Spleen (tissue), 13 donors: ENCODE measurements at regions of chr10 and their contacts with region 1.

Region 1: DNA sequence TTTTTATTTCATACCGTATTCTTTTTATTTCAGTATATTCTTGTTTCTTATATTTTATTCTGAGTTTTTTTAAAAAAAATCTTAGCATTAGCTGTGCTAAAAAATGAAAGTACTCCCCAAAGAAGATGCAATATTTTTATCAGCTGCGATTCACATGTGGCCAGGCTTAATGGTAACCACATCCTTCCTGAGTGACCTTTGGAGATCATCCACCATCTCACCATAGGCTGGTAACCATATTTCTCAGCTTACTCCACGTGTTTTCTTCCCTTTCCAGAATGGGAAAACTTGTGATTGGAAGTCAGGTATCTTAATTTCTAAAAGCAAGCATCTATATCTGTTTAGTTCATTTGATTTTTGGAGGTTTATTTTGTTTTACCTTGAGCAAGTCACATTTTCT is 18.8 kb upstream of the LIPM start:
- DNase-seq: no peak
- H3K4me3 ChIP-seq: no peak overlapping the region
- H3K27ac ChIP-seq: no peak overlapping the region
- H3K4me1 ChIP-seq: no peaks in the 10 kb centered on the region
- H3K27me3 ChIP-seq: no peaks in the 10 kb centered on the region
- CTCF ChIP-seq: no peak
- POLR2A ChIP-seq: no peak

Region 2: GRCh38 chr10:88693392-88694020 is 90.2 kb before region 1 on chr10:
- intact Hi-C with region 1: loop called (anchors 10 kb)
- DNase-seq: no peak
- H3K4me3 ChIP-seq: no peak overlapping the region
- H3K27ac ChIP-seq: no peak overlapping the region
- H3K4me1 ChIP-seq: no peaks in the 10 kb centered on the region
- H3K27me3 ChIP-seq: no peaks in the 10 kb centered on the region
- CTCF ChIP-seq: peak in 2 of 11 experiments; percentile 10 to 14
- POLR2A ChIP-seq: no peak

Region 3: DNA sequence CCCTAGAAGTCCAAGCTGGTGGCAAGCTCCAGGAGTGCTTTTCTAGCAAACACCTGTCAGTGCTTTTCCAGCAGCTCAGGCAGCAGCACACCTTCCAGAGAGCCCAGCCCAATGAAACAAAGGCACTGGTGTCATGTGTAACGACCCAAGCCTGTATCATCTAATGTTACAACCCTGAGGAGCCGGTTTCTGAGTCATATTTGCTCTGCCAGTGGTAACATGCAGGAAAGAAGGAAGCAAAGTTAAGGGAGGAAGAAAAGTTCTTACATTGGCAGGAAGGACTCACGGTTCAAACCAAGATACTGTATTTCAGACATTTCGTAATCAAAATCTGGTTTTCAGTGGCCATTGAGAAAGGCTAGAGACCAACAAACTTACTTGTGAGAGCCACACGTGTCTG is 68.0 kb after region 1 on chr10 and contains the start of gene ANKRD22:
- intact Hi-C with region 1: no loop called
- DNase-seq: no peak
- H3K4me3 ChIP-seq: peak within 1 kb of the TSS in 5 of 8 donors; percentile 8 to 47 (median 16)
- H3K27ac ChIP-seq: peak within 1 kb of the TSS in 7 of 8 donors; percentile 46 to 84 (median 77)
- H3K4me1 ChIP-seq: peaks cover 0 to 64% (median 8%) of the 10 kb centered on the region in 6 donors
- H3K27me3 ChIP-seq: no peaks in the 10 kb centered on the region
- CTCF ChIP-seq: no peak
- POLR2A ChIP-seq: no peak
- total RNA-seq, gene ANKRD22: 4.8 to 11.5 (median 7.7) TPM

Region 4: DNA sequence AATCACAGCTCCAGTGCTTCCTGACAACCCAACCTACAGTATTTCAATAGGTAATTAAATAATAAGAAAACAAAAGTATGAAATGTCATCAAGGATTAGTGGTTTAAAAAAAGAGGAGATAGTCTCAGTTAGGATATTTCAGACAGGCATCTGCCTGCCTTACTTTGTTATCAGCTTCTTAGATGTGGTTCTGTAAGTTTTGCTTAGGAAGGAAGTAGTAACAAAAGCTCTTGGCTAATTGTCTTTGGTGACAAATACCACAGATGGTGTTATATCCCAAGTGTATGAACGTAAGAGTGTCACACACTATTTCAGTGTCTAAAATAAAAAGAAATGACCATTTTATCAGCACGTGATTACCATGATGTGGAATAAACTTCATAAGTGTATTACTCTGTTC is 178.6 kb after region 1 on chr10:
- intact Hi-C with region 1: no loop called
- DNase-seq: no peak
- H3K4me3 ChIP-seq: no peak overlapping the region
- H3K27ac ChIP-seq: no peak overlapping the region
- H3K4me1 ChIP-seq: peaks cover 0 to 27% (median 10%) of the 10 kb centered on the region in 6 donors
- H3K27me3 ChIP-seq: no peaks in the 10 kb centered on the region
- CTCF ChIP-seq: no peak
- POLR2A ChIP-seq: no peak